CD8-positive, alpha-beta T cell (primary cell): ENCODE measurements at regions of chr3 and their contacts with region 1.

Region 1: GRCh38 chr3:187714404-187714979 is 12.1 kb upstream of the RTP2 start:
- DNase-seq: peak; percentile 43 to 82 (median 67)
- ATAC-seq: peak; percentile 92
- H3K4me3 ChIP-seq: no peak overlapping the region
- H3K4me3 Mint-ChIP-seq: no peak overlapping the region
- H3K27ac ChIP-seq: no peak overlapping the region
- H3K27ac Mint-ChIP-seq: no peak overlapping the region
- H3K4me1 ChIP-seq: no peaks in the 10 kb centered on the region
- H3K4me1 Mint-ChIP-seq: peaks cover 12% of the 10 kb centered on the region
- H3K27me3 ChIP-seq: no peaks in the 10 kb centered on the region
- H3K27me3 Mint-ChIP-seq: no peaks in the 10 kb centered on the region
- CTCF ChIP-seq: peak; percentile 98

Region 2: DNA sequence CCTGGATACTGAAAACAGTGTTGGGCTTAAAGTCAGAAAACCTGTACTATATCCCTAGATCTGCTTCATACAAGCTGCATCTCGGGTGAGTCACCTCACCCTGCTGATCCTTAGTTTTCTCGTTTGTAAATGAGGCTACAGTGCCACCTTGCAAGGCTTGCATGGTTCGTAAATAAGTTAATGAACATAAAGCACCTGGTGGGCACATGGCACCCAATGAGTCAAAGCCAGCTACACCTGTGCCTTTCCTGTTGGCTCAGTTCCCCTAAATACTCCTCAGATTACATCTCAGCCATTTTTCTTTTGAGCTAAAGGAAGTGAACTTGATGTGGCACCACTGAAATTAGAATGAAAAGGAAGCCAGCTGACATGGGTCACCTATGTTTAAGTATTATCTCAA is 490.7 kb before region 1 on chr3:
- CTCF ChIA-PET with region 1: interaction called, 11 read pairs
- POLR2A ChIA-PET with region 1: no interaction called
- intact Hi-C with region 1: loop called (anchors 1 to 2 kb)
- DNase-seq: no peak
- ATAC-seq: no peak
- H3K4me3 ChIP-seq: no peak overlapping the region
- H3K4me3 Mint-ChIP-seq: no peak overlapping the region
- H3K27ac ChIP-seq: no peak overlapping the region
- H3K27ac Mint-ChIP-seq: no peak overlapping the region
- H3K4me1 ChIP-seq: no peaks in the 10 kb centered on the region
- H3K4me1 Mint-ChIP-seq: no peaks in the 10 kb centered on the region
- H3K27me3 ChIP-seq: peaks cover 0 to 2% of the 10 kb centered on the region in 2 experiments
- H3K27me3 Mint-ChIP-seq: peaks cover 11% of the 10 kb centered on the region
- CTCF ChIP-seq: no peak

Region 3: DNA sequence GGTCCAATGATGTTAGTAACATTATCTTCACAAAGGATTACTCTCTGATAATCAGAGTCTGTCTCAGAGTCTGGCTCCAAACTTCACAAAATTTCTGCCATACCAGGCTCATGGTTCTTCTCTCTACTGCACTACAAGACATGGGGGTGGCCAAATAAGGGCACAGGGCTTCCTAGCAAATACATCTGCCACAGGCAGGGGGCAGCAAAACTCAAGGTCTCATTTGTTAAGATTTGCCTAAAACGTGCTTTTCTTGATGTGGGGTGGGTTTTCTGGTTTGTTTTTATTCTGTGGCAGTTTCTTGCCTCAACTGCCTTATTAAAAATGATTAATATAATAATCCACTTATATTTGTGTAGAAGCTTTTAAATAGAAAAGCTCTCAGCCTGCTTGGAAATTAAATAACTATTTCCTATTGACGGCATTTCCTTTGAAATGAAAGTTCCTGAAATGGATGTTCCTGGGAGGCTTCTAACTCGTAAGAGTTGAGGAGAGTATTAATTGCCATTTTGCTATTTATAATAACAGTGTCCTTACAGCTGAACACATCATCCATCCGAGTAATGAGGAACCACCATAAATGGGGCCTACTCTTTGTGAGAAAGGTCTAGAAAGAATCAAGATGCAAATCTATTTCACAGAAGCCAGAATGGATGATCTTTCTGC is 98.1 kb before region 1 on chr3:
- CTCF ChIA-PET with region 1: interaction called, 14 read pairs
- POLR2A ChIA-PET with region 1: no interaction called
- intact Hi-C with region 1: loop called (anchors 1 kb)
- DNase-seq: peak; percentile 7 to 64 (median 44)
- ATAC-seq: peak; percentile 58
- H3K4me3 ChIP-seq: no peak overlapping the region
- H3K4me3 Mint-ChIP-seq: no peak overlapping the region
- H3K27ac ChIP-seq: no peak overlapping the region
- H3K27ac Mint-ChIP-seq: no peak overlapping the region
- H3K4me1 ChIP-seq: peaks cover 9% of the 10 kb centered on the region
- H3K4me1 Mint-ChIP-seq: peaks cover 8% of the 10 kb centered on the region
- H3K27me3 ChIP-seq: no peaks in the 10 kb centered on the region
- H3K27me3 Mint-ChIP-seq: peaks cover 7% of the 10 kb centered on the region
- CTCF ChIP-seq: peak; percentile 70